Mammary epithelial cell (primary cell): ENCODE measurements at regions of chr7 and their contacts with region 1.

Region 1: GRCh38 chr7:97104719-97105238 is 12.7 kb upstream of the SDHAF3 start:
- DNase-seq: peak; percentile 47
- H3K4me3 ChIP-seq: no peak overlapping the region
- H3K27ac ChIP-seq: no peak overlapping the region
- H3K4me1 ChIP-seq: no peaks in the 10 kb centered on the region
- H3K27me3 ChIP-seq: no peaks in the 10 kb centered on the region
- CTCF ChIP-seq: peak; percentile 64 to 83

Region 2: GRCh38 chr7:97179454-97180104 is 74.8 kb after region 1 on chr7:
- CTCF ChIA-PET with region 1: no interaction called
- dilution Hi-C with region 1: no loop called
- in situ Hi-C with region 1: no loop called
- intact Hi-C with region 1: loop called (anchors 1 kb)
- DNase-seq: peak; percentile 32
- H3K4me3 ChIP-seq: no peak overlapping the region
- H3K27ac ChIP-seq: no peak overlapping the region
- H3K4me1 ChIP-seq: no peaks in the 10 kb centered on the region
- H3K27me3 ChIP-seq: no peaks in the 10 kb centered on the region
- CTCF ChIP-seq: peak; percentile 54 to 78

Region 3: DNA sequence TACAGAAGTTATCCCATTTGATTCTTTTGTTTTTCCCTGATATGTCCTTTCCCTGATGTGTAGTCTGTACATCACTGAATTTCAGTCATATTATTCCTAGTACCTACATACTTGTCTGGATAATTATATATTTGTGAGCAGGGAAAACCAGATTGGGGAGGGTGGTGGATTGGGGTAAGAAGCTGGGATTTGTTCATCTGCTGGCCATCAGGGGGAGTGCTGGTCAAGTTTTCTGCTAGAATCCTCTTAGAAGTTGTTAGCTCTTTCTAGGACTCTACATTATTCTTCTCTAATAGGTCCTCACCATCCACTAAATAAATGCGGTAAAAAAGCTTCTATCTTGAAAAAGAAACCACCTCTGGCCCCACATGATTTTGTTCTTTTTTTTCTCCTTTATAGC is 394.4 kb after region 1 on chr7:
- CTCF ChIA-PET with region 1: no interaction called
- dilution Hi-C with region 1: no loop called
- in situ Hi-C with region 1: no loop called
- intact Hi-C with region 1: loop called (anchors 1 kb)
- DNase-seq: peak; percentile 10
- H3K4me3 ChIP-seq: no peak overlapping the region
- H3K27ac ChIP-seq: no peak overlapping the region
- H3K4me1 ChIP-seq: no peaks in the 10 kb centered on the region
- H3K27me3 ChIP-seq: no peaks in the 10 kb centered on the region
- CTCF ChIP-seq: peak; percentile 44 to 71

Region 4: DNA sequence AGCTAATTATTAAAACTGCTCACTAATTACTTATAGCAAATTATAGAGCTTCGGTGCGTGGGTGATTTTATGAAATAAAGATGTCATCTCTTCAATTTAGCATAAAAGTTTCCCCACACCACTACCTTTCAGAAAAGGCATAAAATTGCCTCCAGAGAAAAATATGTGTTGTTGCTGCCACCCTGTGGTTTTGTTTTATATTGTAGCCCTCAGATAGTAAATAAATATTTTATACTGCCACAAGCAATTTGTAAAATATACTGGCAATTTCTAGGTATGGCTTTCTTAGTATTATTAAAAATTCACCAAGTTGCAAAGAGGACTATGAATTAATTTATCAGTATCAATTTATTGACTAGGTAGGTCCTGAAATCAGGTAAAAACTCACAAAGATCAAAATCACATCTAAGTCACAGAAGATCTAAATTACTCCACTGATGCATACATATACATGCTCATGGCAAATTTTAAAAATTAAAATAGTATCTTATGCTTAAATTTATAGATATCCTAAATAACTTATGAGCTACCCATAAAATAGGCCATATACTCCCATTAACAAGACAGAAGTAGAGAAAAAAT is 740.9 kb after region 1 on chr7:
- CTCF ChIA-PET with region 1: no interaction called
- dilution Hi-C with region 1: no loop called
- in situ Hi-C with region 1: no loop called
- intact Hi-C with region 1: loop called (anchors 1 kb)
- DNase-seq: no peak
- H3K4me3 ChIP-seq: no peak overlapping the region
- H3K27ac ChIP-seq: no peak overlapping the region
- H3K4me1 ChIP-seq: no peaks in the 10 kb centered on the region
- H3K27me3 ChIP-seq: no peaks in the 10 kb centered on the region
- CTCF ChIP-seq: peak; percentile 25 to 44

Region 5: DNA sequence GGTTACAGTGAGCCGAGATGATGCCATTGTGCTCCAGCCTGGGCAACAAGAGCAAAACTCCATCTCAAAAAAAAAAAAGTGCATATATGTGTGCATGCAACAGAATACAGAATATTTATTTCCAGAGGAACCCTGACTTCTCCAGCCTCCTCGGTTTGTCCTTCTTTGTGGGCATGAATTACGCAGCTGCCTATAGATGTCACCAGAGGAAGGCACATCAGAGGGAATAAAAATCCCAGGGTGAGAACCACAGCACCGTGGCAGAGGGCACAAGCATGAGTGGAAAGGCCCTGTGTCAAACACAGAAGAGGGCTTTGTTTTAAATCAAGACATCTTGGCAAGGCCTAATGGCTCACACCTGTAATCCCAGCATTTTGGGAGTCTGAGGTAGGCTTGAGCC is 909.6 kb after region 1 on chr7:
- CTCF ChIA-PET with region 1: no interaction called
- dilution Hi-C with region 1: no loop called
- in situ Hi-C with region 1: no loop called
- intact Hi-C with region 1: loop called (anchors 5 kb)
- DNase-seq: no peak
- H3K4me3 ChIP-seq: no peak overlapping the region
- H3K27ac ChIP-seq: no peak overlapping the region
- H3K4me1 ChIP-seq: no peaks in the 10 kb centered on the region
- H3K27me3 ChIP-seq: no peaks in the 10 kb centered on the region
- CTCF ChIP-seq: peak in 1 of 2 donors; percentile 2